Naive thymus-derived CD4-positive, alpha-beta T cell (primary cell): ENCODE measurements at regions of chr1 and their contacts with region 1.

Region 1: GRCh38 chr1:172532700-172533509 is at the start of gene SUCO:
- DNase-seq: peak; percentile 97 to 100 (median 99)
- ATAC-seq: peak; percentile 90
- H3K4me3 ChIP-seq: peak within 1 kb of the TSS; percentile 98
- H3K4me3 Mint-ChIP-seq: peak within 1 kb of the TSS; percentile 90 to 100 (median 98)
- H3K27ac ChIP-seq: peak within 1 kb of the TSS; percentile 99
- H3K27ac Mint-ChIP-seq: peak within 1 kb of the TSS; percentile 99 to 100 (median 100)
- H3K4me1 ChIP-seq: peaks cover 30 to 34% of the 10 kb centered on the region in 2 donors
- H3K4me1 Mint-ChIP-seq: peaks cover 32 to 60% (median 49%) of the 10 kb centered on the region in 7 donors
- H3K27me3 ChIP-seq: no peaks in the 10 kb centered on the region
- H3K27me3 Mint-ChIP-seq: peaks cover 0 to 16% (median 4%) of the 10 kb centered on the region in 5 donors
- total RNA-seq, gene SUCO: 52.0 to 95.0 (median 77.0) TPM

Region 2: GRCh38 chr1:171781176-171781875 is 751.6 kb before region 1 on chr1 and contains the start of gene METTL13:
- CTCF ChIA-PET with region 1: no interaction called
- POLR2A ChIA-PET with region 1: interaction called, 3 read pairs
- intact Hi-C with region 1: loop called (anchors 1 kb)
- DNase-seq: peak; percentile 89 to 100 (median 99)
- ATAC-seq: peak; percentile 95
- H3K4me3 ChIP-seq: peak within 1 kb of the TSS; percentile 95
- H3K4me3 Mint-ChIP-seq: peak within 1 kb of the TSS; percentile 90 to 99 (median 94)
- H3K27ac ChIP-seq: peak within 1 kb of the TSS; percentile 74
- H3K27ac Mint-ChIP-seq: peak within 1 kb of the TSS; percentile 93 to 99 (median 96)
- H3K4me1 ChIP-seq: peaks cover 20 to 41% of the 10 kb centered on the region in 2 donors
- H3K4me1 Mint-ChIP-seq: peaks cover 28 to 65% (median 58%) of the 10 kb centered on the region in 7 donors
- H3K27me3 ChIP-seq: no peaks in the 10 kb centered on the region
- H3K27me3 Mint-ChIP-seq: no peaks in the 10 kb centered on the region
- total RNA-seq, gene METTL13: 15.6 to 50.7 (median 34.5) TPM

Region 3: GRCh38 chr1:172398970-172399755 is 133.7 kb before region 1 on chr1:
- CTCF ChIA-PET with region 1: interaction called, 3 read pairs
- POLR2A ChIA-PET with region 1: interaction called, 14 read pairs
- intact Hi-C with region 1: loop called in 1 of 2 experiments (anchors 1 kb)
- DNase-seq: peak in 7 of 9 donors; percentile 20 to 57 (median 46)
- ATAC-seq: peak; percentile 49
- H3K4me3 ChIP-seq: peak overlapping the region; percentile 12
- H3K4me3 Mint-ChIP-seq: peak overlapping the region; percentile 43 to 79 (median 64)
- H3K27ac ChIP-seq: no peak overlapping the region
- H3K27ac Mint-ChIP-seq: peak overlapping the region; percentile 60 to 100 (median 89)
- H3K4me1 ChIP-seq: peaks cover 30 to 46% of the 10 kb centered on the region in 2 donors
- H3K4me1 Mint-ChIP-seq: peaks cover 31 to 85% (median 72%) of the 10 kb centered on the region in 7 donors
- H3K27me3 ChIP-seq: no peaks in the 10 kb centered on the region
- H3K27me3 Mint-ChIP-seq: peaks cover 0 to 2% (median 0%) of the 10 kb centered on the region in 5 donors

Region 4: DNA sequence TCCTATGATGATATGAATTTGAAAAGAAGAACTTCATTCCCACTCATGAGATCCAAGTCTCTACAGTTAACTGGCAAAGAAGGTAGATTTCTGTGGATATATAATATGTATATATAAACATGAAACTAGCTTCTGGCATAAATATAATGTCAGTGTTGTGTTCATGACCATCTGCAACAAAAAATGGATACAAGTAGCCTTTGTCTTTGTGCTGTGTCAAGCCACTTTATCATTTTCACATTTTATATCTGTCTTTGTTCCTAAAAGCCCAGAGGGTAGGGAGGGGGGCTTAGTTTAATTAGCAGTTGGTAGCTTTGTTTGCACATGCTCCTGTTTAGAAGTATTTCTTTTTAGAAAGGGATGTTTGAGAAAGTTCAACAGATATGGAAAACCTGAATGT is 69.8 kb after region 1 on chr1:
- CTCF ChIA-PET with region 1: no interaction called
- POLR2A ChIA-PET with region 1: interaction called, 3 read pairs
- intact Hi-C with region 1: loop called (anchors 2 to 5 kb)
- DNase-seq: no peak
- ATAC-seq: no peak
- H3K4me3 ChIP-seq: no peak overlapping the region
- H3K4me3 Mint-ChIP-seq: no peak overlapping the region
- H3K27ac ChIP-seq: no peak overlapping the region
- H3K27ac Mint-ChIP-seq: peak overlapping the region in 3 of 9 donors; percentile 12 to 46 (median 25)
- H3K4me1 ChIP-seq: no peaks in the 10 kb centered on the region
- H3K4me1 Mint-ChIP-seq: peaks cover 2 to 10% (median 3%) of the 10 kb centered on the region in 7 donors
- H3K27me3 ChIP-seq: no peaks in the 10 kb centered on the region
- H3K27me3 Mint-ChIP-seq: no peaks in the 10 kb centered on the region

Region 5: DNA sequence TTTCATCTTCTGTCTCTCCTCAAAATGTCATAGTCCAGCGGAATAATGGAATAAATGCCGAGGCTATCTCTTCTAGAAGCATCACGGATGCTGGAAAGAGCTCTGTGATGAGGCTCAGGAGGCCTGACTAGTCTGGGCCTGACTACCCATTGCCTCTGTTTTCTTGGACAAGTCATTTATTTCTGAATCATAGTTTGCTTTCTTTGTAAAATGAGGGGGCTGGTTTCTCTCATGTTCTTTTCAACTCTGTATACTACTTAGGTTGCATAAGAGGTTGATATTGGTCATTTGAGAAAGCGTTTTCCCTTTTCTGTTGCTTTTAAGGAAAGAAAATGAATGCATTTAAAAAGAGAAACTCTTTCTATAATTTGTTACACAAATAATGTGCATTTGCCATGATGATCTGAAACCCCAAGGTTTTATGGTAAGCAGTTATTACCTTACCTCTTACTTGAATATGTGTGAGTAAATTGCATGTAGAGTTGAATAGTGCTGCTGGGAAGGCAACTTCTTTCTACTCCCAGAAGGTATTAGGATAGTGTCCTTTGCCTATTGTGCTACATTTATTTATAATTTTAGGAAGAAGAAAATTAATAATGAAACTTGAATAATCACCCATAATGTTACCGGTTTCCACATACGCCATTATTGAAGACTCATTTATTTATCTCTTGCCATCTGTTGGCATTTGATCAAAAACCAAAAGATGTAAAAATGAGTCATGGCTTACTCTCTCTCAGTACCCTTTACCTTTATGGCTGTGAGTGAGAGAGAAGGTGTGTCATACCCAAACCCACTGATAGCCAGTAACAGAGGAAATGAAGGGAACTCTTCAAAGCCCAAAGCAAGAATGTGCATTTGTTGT is 305.1 kb after region 1 on chr1:
- CTCF ChIA-PET with region 1: no interaction called
- POLR2A ChIA-PET with region 1: no interaction called
- intact Hi-C with region 1: loop called in 1 of 2 experiments (anchors 1 kb)
- DNase-seq: peak in 7 of 9 donors; percentile 47 to 78 (median 72)
- ATAC-seq: peak; percentile 99
- H3K4me3 ChIP-seq: no peak overlapping the region
- H3K4me3 Mint-ChIP-seq: peak overlapping the region in 9 of 10 donors; percentile 20 to 59 (median 41)
- H3K27ac ChIP-seq: no peak overlapping the region
- H3K27ac Mint-ChIP-seq: peak overlapping the region in 7 of 9 donors; percentile 63 to 92 (median 78)
- H3K4me1 ChIP-seq: peaks cover 12 to 16% of the 10 kb centered on the region in 2 donors
- H3K4me1 Mint-ChIP-seq: peaks cover 3 to 36% (median 28%) of the 10 kb centered on the region in 7 donors
- H3K27me3 ChIP-seq: no peaks in the 10 kb centered on the region
- H3K27me3 Mint-ChIP-seq: peaks cover 0 to 59% (median 0%) of the 10 kb centered on the region in 5 donors

Region 6: GRCh38 chr1:174022080-174022975 is 1489.4 kb after region 1 on chr1 and contains the start of gene RC3H1:
- CTCF ChIA-PET with region 1: no interaction called
- POLR2A ChIA-PET with region 1: no interaction called
- intact Hi-C with region 1: loop called (anchors 1 to 5 kb)
- DNase-seq: peak; percentile 75 to 89 (median 83)
- ATAC-seq: peak; percentile 97
- H3K4me3 ChIP-seq: peak within 1 kb of the TSS; percentile 86
- H3K4me3 Mint-ChIP-seq: peak within 1 kb of the TSS; percentile 85 to 100 (median 98)
- H3K27ac ChIP-seq: peak within 1 kb of the TSS; percentile 94
- H3K27ac Mint-ChIP-seq: peak within 1 kb of the TSS; percentile 90 to 99 (median 98)
- H3K4me1 ChIP-seq: peaks cover 24 to 32% of the 10 kb centered on the region in 2 donors
- H3K4me1 Mint-ChIP-seq: peaks cover 19 to 52% (median 49%) of the 10 kb centered on the region in 7 donors
- H3K27me3 ChIP-seq: no peaks in the 10 kb centered on the region
- H3K27me3 Mint-ChIP-seq: peaks cover 0 to 5% (median 0%) of the 10 kb centered on the region in 5 donors
- total RNA-seq, gene RC3H1: 36.5 to 49.5 (median 47.7) TPM